WTC11 (cell line): ENCODE measurements at regions of chr3 and their contacts with region 1.

Region 1: GRCh38 chr3:58177747-58178527 is 32.8 kb downstream of the DNASE1L3 start:
- DNase-seq: peak; percentile 97
- ATAC-seq: peak; percentile 82
- H3K4me3 Mint-ChIP-seq: peak overlapping the region; percentile 85
- H3K27ac Mint-ChIP-seq: no peak overlapping the region
- H3K4me1 Mint-ChIP-seq: peaks cover 39% of the 10 kb centered on the region
- H3K27me3 Mint-ChIP-seq: peaks cover 15% of the 10 kb centered on the region
- CTCF ChIP-seq: peak; percentile 96

Region 2: GRCh38 chr3:58008140-58009025 is 169.6 kb before region 1 on chr3 and contains the start of gene FLNB:
- CTCF ChIA-PET with region 1: interaction called, 20 read pairs
- POLR2A ChIA-PET with region 1: interaction called, 3 read pairs
- DNase-seq: peak; percentile 82
- ATAC-seq: peak; percentile 73
- H3K4me3 Mint-ChIP-seq: peak within 1 kb of the TSS; percentile 92
- H3K27ac Mint-ChIP-seq: peak within 1 kb of the TSS; percentile 92
- H3K4me1 Mint-ChIP-seq: peaks cover 42% of the 10 kb centered on the region
- H3K27me3 Mint-ChIP-seq: no peaks in the 10 kb centered on the region
- CTCF ChIP-seq: peak; percentile 55
- total RNA-seq, gene FLNB: 107 to 127 TPM (median 107 TPM) in 3 replicates

Region 3: GRCh38 chr3:58167431-58168351 is 10.2 kb before region 1 on chr3:
- CTCF ChIA-PET with region 1: interaction called, 57 read pairs
- POLR2A ChIA-PET with region 1: no interaction called
- DNase-seq: peak; percentile 82
- ATAC-seq: peak; percentile 94
- H3K4me3 Mint-ChIP-seq: no peak overlapping the region
- H3K27ac Mint-ChIP-seq: no peak overlapping the region
- H3K4me1 Mint-ChIP-seq: peaks cover 2% of the 10 kb centered on the region; the same call in 1 of the 2 replicates
- H3K27me3 Mint-ChIP-seq: no peaks in the 10 kb centered on the region
- CTCF ChIP-seq: peak; percentile 97

Region 4: GRCh38 chr3:58200846-58201355 is 23.0 kb after region 1 on chr3:
- CTCF ChIA-PET with region 1: interaction called, 14 read pairs
- POLR2A ChIA-PET with region 1: no interaction called
- DNase-seq: no peak
- ATAC-seq: no peak
- H3K4me3 Mint-ChIP-seq: no peak overlapping the region
- H3K27ac Mint-ChIP-seq: no peak overlapping the region
- H3K4me1 Mint-ChIP-seq: no peaks in the 10 kb centered on the region
- H3K27me3 Mint-ChIP-seq: no peaks in the 10 kb centered on the region
- CTCF ChIP-seq: no peak

Region 5: GRCh38 chr3:58249358-58250092 is 71.6 kb after region 1 on chr3:
- CTCF ChIA-PET with region 1: interaction called, 14 read pairs
- POLR2A ChIA-PET with region 1: no interaction called
- DNase-seq: no peak
- ATAC-seq: peak; percentile 77
- H3K4me3 Mint-ChIP-seq: no peak overlapping the region
- H3K27ac Mint-ChIP-seq: peak overlapping the region; percentile 76; the same call in 1 of the 2 replicates
- H3K4me1 Mint-ChIP-seq: peaks cover 6% of the 10 kb centered on the region
- H3K27me3 Mint-ChIP-seq: no peaks in the 10 kb centered on the region
- CTCF ChIP-seq: no peak

Region 6: DNA sequence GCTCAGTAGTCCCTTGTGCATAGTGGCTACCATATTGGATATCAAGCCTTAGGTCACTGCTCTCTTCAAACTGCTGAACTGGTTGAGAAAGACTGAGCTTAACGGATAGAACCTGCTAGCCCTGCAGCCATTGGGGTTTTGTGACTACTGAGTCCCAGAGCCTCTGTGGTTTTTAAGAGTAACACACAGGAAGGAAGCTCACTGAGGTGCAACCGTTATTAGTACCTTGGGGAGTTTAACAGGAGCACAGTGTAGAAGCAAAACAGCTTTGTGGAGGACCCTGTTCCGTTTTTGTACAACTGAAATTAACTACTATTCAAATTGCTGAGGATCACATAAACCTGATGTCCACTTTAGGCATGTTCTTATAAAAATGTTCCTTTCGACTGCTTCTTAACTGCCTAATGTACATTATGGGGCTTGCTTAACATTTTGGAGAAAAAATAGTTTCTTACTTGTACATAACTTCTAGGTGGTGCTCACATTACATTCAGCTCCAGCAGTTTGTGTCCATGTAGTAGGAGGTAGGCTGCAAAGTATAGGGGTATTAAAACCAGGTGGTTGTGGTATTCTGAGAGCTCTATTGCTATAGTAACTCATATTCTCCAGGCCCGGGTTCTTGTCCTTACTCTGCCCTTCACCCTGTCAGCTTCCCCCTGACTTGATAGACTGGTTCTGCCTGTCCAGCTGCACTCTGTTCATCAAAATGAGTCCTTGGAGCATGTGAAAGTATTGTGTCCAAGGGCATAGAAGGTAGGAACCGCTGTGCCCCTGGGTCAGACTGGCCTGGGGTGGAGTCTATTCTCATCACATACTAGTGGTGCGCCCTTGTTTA is 172.1 kb after region 1 on chr3:
- CTCF ChIA-PET with region 1: interaction called, 16 read pairs
- POLR2A ChIA-PET with region 1: no interaction called
- DNase-seq: no peak
- ATAC-seq: no peak
- H3K4me3 Mint-ChIP-seq: no peak overlapping the region
- H3K27ac Mint-ChIP-seq: no peak overlapping the region
- H3K4me1 Mint-ChIP-seq: peaks cover 14% of the 10 kb centered on the region
- H3K27me3 Mint-ChIP-seq: no peaks in the 10 kb centered on the region
- CTCF ChIP-seq: no peak